ENCODE measurements at regions of chr3 and their contacts with region 1.

Region 1: DNA sequence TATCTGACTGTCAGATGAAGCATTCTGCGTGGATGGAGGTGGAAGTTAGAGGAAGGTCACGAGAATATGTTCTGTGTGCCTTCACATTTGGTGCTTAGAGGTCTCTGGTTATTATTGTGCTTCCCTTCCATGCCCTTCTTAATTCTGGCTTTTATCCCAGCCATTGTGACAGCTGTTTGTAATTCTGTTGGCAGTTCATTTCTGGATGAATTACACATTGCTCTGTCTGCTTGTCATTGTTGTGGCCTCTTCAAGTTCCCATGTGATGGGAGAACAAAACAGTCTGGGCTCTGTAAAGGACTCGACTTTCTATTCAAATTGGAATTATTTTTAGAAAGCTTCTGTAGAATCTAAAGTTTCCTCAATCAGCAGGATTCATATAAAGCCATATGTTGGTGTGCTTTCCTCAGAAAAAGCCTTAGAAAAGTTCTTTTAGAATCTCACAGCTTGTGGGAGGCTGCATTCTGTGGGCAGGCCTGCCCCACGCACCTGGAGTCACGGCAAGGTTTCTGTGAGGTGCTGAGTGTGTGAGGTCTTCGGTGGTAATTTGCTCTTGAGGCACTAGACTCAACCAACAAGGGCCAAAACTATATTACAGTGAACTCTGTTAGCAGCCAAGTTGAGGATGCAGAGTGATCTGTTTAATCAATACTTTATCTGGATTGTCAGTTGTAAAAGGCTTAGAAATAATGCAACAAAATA is 397.4 kb upstream of the AZI2 start:
- DNase-seq: no peak
- ATAC-seq: peak; percentile 93

Region 2: DNA sequence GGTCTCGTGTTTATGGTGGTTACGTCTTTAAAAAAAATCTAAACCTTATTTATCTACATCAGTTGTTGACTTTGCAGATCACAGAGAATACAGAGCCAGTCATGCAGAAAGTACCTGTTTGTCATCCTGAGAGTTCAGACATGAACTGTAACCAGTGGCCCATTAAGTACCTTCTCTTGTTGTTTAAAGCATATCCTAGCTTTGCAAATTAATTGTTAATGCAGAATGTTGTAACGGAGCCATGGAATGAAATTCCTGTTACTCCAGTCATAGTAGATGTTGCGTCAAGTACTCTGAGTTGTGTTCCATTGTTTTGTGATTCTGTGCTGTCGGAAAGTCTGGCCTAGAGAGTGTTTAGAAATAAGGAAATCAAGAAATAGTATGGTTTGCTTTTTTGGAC is 740.0 kb after region 1 on chr3:
- intact Hi-C with region 1: loop called (anchors 5 kb)
- DNase-seq: no peak
- ATAC-seq: no peak

Measured in left ventricle myocardium superior (tissue), 1 donor.